Heart right ventricle (tissue), 16 donors: ENCODE measurements at regions of chr2 and their contacts with region 1.

Region 1: GRCh38 chr2:98165516-98166071 is 78.6 kb downstream of the VWA3B start:
- DNase-seq: no peak
- ATAC-seq: no peak
- H3K4me3 ChIP-seq: no peak overlapping the region
- H3K27ac ChIP-seq: no peak overlapping the region
- H3K4me1 ChIP-seq: peaks cover 6 to 44% (median 34%) of the 10 kb centered on the region in 9 donors
- H3K27me3 ChIP-seq: peaks cover 0 to 3% (median 0%) of the 10 kb centered on the region in 7 donors
- CTCF ChIP-seq: no peak

Region 2: GRCh38 chr2:97982621-97983020 is 183.0 kb before region 1 on chr2:
- intact Hi-C with region 1: no loop called
- DNase-seq: no peak
- ATAC-seq: no peak
- H3K4me3 ChIP-seq: no peak overlapping the region
- H3K27ac ChIP-seq: no peak overlapping the region
- H3K4me1 ChIP-seq: peaks cover 0 to 31% (median 18%) of the 10 kb centered on the region in 9 donors
- H3K27me3 ChIP-seq: no peaks in the 10 kb centered on the region
- CTCF ChIP-seq: no peak

Region 3: DNA sequence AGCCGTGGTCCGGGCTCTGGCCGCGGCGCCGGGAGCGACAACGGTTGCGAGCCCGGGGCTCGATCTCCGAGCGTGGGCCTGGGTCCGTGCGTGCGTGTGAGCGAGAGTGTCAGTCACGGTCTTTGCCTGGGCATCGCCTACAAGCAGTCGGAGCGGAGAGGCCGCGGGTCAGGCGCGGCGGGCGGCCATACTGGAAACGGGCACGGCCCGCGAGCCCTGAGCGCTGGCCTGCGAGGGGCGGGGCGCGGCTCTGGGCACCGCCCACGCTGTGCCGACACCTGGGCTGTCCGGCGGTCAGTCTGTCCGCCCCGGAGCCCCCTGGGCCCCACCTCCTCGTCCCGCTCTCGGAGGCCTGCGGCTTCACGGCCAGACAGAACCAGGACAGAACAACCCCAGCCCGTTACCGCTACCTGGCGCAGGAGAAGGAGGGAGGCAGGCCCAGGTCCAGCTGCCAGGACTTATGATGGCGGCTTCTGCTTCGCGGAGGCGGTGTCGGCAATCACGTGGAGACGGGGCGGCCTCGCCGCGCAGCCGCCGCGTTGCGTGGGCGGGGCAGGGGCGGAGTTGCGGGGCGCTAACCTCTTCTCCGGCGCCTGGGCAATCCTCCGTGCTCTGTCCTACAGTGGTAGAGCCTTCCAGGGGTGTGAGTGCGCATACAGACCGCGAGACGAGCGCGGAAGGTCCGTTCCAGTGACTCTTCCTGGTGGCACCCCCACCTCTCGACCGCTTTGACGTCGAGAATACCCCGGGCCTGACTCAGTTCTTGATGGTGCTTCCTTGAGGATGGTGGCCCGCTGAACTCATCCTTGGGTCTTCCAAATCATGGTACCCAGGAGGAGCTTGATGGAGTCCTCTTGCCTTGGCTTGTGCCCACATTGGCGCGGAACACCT is 169.6 kb before region 1 on chr2 and contains the start of gene TMEM131:
- intact Hi-C with region 1: loop called in 3 of 10 experiments (anchors 5 to 10 kb)
- DNase-seq: peak; percentile 95 to 96
- ATAC-seq: peak; percentile 97 to 99 (median 97)
- H3K4me3 ChIP-seq: peak within 1 kb of the TSS; percentile 61 to 91 (median 86)
- H3K27ac ChIP-seq: peak within 1 kb of the TSS; percentile 94 to 99 (median 96)
- H3K4me1 ChIP-seq: peaks cover 0 to 45% (median 31%) of the 10 kb centered on the region in 9 donors
- H3K27me3 ChIP-seq: no peaks in the 10 kb centered on the region
- CTCF ChIP-seq: no peak
- total RNA-seq, gene TMEM131: 26.3 to 34.3 (median 30.7) TPM

Region 4: DNA sequence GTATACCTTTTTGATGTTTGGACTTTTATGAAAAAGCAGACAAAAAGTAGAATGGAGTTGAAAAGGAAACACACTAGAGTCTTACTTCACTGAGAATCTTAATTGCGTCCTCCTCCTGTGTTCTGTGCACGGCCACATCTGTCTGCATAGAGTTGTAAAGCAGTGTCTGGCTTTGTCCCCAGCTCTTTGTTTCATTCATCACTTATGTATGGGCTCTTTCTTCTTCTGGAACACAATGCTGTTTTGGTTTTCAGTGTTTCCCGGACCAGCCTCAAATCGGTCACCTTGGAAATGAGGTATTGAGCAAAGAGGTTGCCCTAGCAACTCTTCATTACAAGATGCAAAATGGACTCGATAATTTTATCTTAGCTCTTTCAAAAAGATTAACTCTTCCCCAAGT is 76.4 kb after region 1 on chr2:
- intact Hi-C with region 1: no loop called
- DNase-seq: no peak
- ATAC-seq: no peak
- H3K4me3 ChIP-seq: no peak overlapping the region
- H3K27ac ChIP-seq: no peak overlapping the region
- H3K4me1 ChIP-seq: no peaks in the 10 kb centered on the region
- H3K27me3 ChIP-seq: no peaks in the 10 kb centered on the region
- CTCF ChIP-seq: no peak

Region 5: GRCh38 chr2:98608116-98608999 is 442.8 kb after region 1 on chr2 and contains the starts of genes COA5 and UNC50:
- intact Hi-C with region 1: no loop called
- DNase-seq: peak; percentile 92
- ATAC-seq: peak; percentile 96 to 99 (median 98)
- H3K4me3 ChIP-seq: peak within 1 kb of the TSS; percentile 62 to 99 (median 94)
- H3K27ac ChIP-seq: peak within 1 kb of the TSS; percentile 84 to 100 (median 96)
- H3K4me1 ChIP-seq: peaks cover 16 to 65% (median 54%) of the 10 kb centered on the region in 9 donors
- H3K27me3 ChIP-seq: no peaks in the 10 kb centered on the region
- CTCF ChIP-seq: peak in 3 of 9 donors; percentile 2 to 18 (median 9)
- total RNA-seq, gene COA5: 20.2 to 33.8 (median 26.0) TPM
- total RNA-seq, gene UNC50: 21.3 to 34.2 (median 25.3) TPM